IMR-90 (cell line): ENCODE measurements at regions of chr10 and their contacts with region 1.

Region 1: DNA sequence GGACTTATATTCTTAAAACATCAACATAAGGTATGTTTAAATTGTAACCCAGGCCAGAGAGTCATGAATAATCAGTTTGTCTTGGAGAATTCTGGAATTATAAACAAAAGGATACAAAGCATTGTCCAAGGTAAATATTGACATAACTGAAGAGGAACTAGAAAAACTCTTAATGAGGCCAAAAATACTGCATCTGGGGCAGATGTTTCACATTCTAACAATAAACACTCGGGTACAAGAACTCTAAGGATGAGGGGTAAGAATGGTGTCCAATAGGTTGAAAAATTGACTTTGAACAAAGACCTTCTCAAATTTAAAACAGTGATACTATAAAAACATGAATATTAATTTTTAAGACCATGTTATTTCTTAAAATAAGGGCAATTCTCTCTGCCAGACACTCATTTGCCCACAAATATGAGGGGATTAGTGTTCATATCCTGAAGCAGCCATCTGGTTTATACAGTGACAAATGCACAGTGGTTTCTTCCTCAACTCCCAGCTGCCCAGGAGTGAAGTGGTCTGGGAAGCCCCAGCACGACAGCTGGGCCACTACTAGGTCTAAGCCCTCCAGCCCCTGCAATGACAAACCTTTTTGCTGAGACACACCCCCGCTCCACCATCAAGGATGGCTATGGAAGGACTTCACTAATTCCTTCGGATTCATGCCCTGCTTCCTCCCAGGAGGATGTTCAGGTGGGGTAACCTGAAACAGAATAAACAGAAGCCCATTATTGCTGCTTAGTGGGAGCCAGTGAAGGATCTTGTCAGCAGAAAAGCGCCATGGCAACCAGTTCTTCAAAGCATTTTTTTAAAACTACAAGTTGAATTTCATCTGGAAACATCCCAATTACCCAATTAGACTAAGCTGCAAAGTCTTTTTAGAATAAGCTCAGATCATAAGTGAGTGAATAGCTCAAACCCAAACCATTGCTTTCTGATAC is 107.5 kb upstream of the ARID5B start:
- DNase-seq: peak; percentile 79
- ATAC-seq: peak; percentile 41
- H3K4me3 ChIP-seq: no peak overlapping the region
- H3K27ac ChIP-seq: peak overlapping the region; percentile 80
- H3K4me1 ChIP-seq: peaks cover 19% of the 10 kb centered on the region
- H3K27me3 ChIP-seq: no peaks in the 10 kb centered on the region
- CTCF ChIP-seq: no peak
- POLR2A ChIP-seq: no peak
- RAD21 ChIP-seq: no peak

Region 2: GRCh38 chr10:61628875-61629513 is 165.0 kb before region 1 on chr10:
- CTCF ChIA-PET with region 1: no interaction called
- POLR2A ChIA-PET with region 1: interaction called, 11 read pairs
- dilution Hi-C with region 1: no loop called
- in situ Hi-C with region 1: no loop called
- intact Hi-C with region 1: no loop called
- DNase-seq: peak; percentile 95
- ATAC-seq: peak; percentile 87
- H3K4me3 ChIP-seq: no peak overlapping the region
- H3K27ac ChIP-seq: peak overlapping the region; percentile 98
- H3K4me1 ChIP-seq: peaks cover 22% of the 10 kb centered on the region
- H3K27me3 ChIP-seq: no peaks in the 10 kb centered on the region
- CTCF ChIP-seq: no peak
- POLR2A ChIP-seq: no peak
- RAD21 ChIP-seq: no peak